ENCODE measurements at regions of chr15 and their contacts with region 1.

Region 1: DNA sequence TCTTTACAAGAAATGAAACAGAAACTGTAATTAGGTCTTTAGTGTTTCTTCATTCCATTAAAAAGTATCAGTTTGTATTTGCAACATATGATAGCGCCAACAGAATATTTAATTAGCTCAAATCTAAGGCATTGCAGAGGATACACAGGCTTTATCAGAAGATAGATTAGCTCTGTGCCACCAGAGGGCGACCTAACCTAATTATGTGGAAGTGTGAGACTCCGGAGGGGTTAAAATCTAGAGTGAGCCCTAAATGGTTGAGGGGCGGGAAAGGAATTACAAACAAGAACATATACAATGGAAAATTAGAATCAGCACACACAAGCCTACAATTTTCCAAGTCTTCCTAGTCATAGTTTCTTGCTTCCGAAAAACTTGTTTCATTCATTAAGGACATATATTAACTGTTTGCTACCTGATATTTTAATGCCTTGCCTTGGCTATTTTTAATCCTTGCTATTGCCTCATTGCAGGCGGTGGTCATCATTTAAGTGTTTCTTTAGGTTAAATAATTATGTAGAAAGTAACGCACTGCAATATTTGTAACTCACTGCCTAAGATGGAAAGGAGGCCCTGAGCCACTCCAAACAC is 18.0 kb upstream of the RYR3 start:
- DNase-seq: peak; percentile 67
- H3K4me3 ChIP-seq: no peak overlapping the region; a peak in 1 of 4 replicates
- H3K27ac ChIP-seq: no peak overlapping the region
- H3K4me1 ChIP-seq: no peaks in the 10 kb centered on the region
- H3K27me3 ChIP-seq: no peaks in the 10 kb centered on the region
- CTCF ChIP-seq: peak; percentile 90
- EP300 ChIP-seq: no peak
- RAD21 ChIP-seq: peak; percentile 87

Region 2: GRCh38 chr15:33086507-33087121 is 206.2 kb before region 1 on chr15:
- CTCF ChIA-PET with region 1: interaction called, 10 read pairs
- POLR2A ChIA-PET with region 1: no interaction called
- DNase-seq: peak; percentile 30
- H3K4me3 ChIP-seq: no peak overlapping the region
- H3K27ac ChIP-seq: peak overlapping the region; percentile 48 to 85; a peak in 3 of 4 replicates
- H3K4me1 ChIP-seq: peaks cover 3 to 31% of the 10 kb centered on the region in 2 experiments
- H3K27me3 ChIP-seq: no peaks in the 10 kb centered on the region
- CTCF ChIP-seq: peak; percentile 80
- EP300 ChIP-seq: peak in 1 of 2 experiments; percentile 49; a peak in 2 of 4 replicates
- RAD21 ChIP-seq: peak; percentile 87

Region 3: GRCh38 chr15:33154351-33155166 is 138.3 kb before region 1 on chr15:
- CTCF ChIA-PET with region 1: no interaction called
- POLR2A ChIA-PET with region 1: no interaction called
- DNase-seq: no peak
- H3K4me3 ChIP-seq: peak overlapping the region; percentile 51 to 64; a peak in 3 of 4 replicates
- H3K27ac ChIP-seq: peak overlapping the region; percentile 64 to 99; a peak in 3 of 4 replicates
- H3K4me1 ChIP-seq: peaks cover 6 to 17% of the 10 kb centered on the region in 2 experiments
- H3K27me3 ChIP-seq: no peaks in the 10 kb centered on the region
- CTCF ChIP-seq: no peak
- EP300 ChIP-seq: peak; percentile 64 to 93
- RAD21 ChIP-seq: no peak

Region 4: GRCh38 chr15:33278816-33279612 is 13.8 kb before region 1 on chr15:
- CTCF ChIA-PET with region 1: interaction called, 41 read pairs
- POLR2A ChIA-PET with region 1: no interaction called
- DNase-seq: no peak
- H3K4me3 ChIP-seq: no peak overlapping the region
- H3K27ac ChIP-seq: peak overlapping the region in 1 of 2 experiments; percentile 94; a peak in 2 of 4 replicates
- H3K4me1 ChIP-seq: peaks cover 6 to 11% of the 10 kb centered on the region in 2 experiments; a peak in 3 of 4 replicates
- H3K27me3 ChIP-seq: no peaks in the 10 kb centered on the region
- CTCF ChIP-seq: peak; percentile 31; the same call in 1 of the 2 replicates
- EP300 ChIP-seq: no peak
- RAD21 ChIP-seq: no peak

Region 5: GRCh38 chr15:33639978-33640377 is 347.2 kb after region 1 on chr15:
- CTCF ChIA-PET with region 1: interaction called, 23 read pairs
- POLR2A ChIA-PET with region 1: no interaction called
- DNase-seq: peak; percentile 74
- H3K4me3 ChIP-seq: no peak overlapping the region; a peak in 1 of 4 replicates
- H3K27ac ChIP-seq: peak overlapping the region in 1 of 2 experiments; percentile 92; a peak in 2 of 4 replicates
- H3K4me1 ChIP-seq: peaks cover 0 to 25% of the 10 kb centered on the region in 2 experiments; a peak in 2 of 4 replicates
- H3K27me3 ChIP-seq: peaks cover 11% of the 10 kb centered on the region; the same call in 1 of the 2 replicates
- CTCF ChIP-seq: no peak
- EP300 ChIP-seq: peak in 1 of 2 experiments; percentile 81; a peak in 2 of 4 replicates
- RAD21 ChIP-seq: peak; percentile 51

Region 6: GRCh38 chr15:33729653-33730052 is 436.8 kb after region 1 on chr15:
- CTCF ChIA-PET with region 1: interaction called, 17 read pairs
- POLR2A ChIA-PET with region 1: no interaction called
- DNase-seq: peak; percentile 14
- H3K4me3 ChIP-seq: no peak overlapping the region
- H3K27ac ChIP-seq: no peak overlapping the region
- H3K4me1 ChIP-seq: no peaks in the 10 kb centered on the region; a peak in 1 of 4 replicates
- H3K27me3 ChIP-seq: no peaks in the 10 kb centered on the region
- CTCF ChIP-seq: peak; percentile 48
- EP300 ChIP-seq: no peak
- RAD21 ChIP-seq: peak; percentile 53